ENCODE measurements at regions of chr1 and their contacts with region 1.

Region 1: GRCh38 chr1:210311726-210312493 is 16.8 kb upstream of the HHAT start:
- DNase-seq: peak in 3 of 5 donors; percentile 43 to 52 (median 43)
- ATAC-seq: peak; percentile 55 to 83 (median 64)
- H3K4me3 ChIP-seq: peak overlapping the region in 10 of 12 donors; percentile 27 to 55 (median 42)
- H3K27ac ChIP-seq: peak overlapping the region; percentile 9 to 94 (median 70)
- H3K4me1 ChIP-seq: peaks cover 0 to 23% (median 6%) of the 10 kb centered on the region in 12 donors
- H3K27me3 ChIP-seq: peaks cover 0 to 3% (median 0%) of the 10 kb centered on the region in 9 donors
- CTCF ChIP-seq: no peak
- POLR2A ChIP-seq: no peak

Region 2: DNA sequence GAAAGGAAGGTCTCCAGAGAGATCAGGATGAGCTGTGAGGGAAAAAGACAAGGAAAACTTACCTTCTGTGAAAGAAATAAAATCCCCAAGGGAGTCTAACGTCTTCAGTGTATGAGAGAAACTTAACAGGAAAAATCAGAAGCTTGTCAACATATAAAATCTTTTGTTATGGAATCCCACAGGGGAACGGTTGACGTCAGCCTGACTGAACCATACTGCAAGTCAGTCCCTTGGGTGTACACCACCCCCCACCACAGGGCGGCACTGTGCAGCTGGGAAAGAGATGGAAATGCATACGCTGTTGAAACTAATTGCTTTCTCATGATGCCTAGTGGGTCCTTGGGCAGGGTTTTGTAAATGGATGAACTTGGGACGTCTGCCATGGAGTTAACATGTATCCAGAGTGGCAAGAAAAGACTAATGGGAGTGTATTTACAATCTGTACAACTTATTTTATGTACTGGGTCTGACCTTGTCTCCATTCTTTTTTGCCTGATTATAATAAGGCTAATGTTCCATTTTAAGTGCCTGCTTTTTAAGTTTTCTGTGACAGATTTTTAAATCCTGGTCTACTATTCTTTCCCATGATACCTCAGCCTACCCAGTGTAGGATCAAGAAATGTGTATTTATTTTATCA is 461.4 kb before region 1 on chr1:
- intact Hi-C with region 1: loop called in 3 of 10 experiments (anchors 10 kb)
- DNase-seq: peak in 4 of 5 donors; percentile 28 to 54 (median 45)
- ATAC-seq: peak in 2 of 4 donors; percentile 42 to 57
- H3K4me3 ChIP-seq: no peak overlapping the region
- H3K27ac ChIP-seq: no peak overlapping the region
- H3K4me1 ChIP-seq: peaks cover 0 to 7% (median 0%) of the 10 kb centered on the region in 12 donors
- H3K27me3 ChIP-seq: no peaks in the 10 kb centered on the region
- CTCF ChIP-seq: peak; percentile 17 to 53 (median 31)
- POLR2A ChIP-seq: no peak

Region 3: DNA sequence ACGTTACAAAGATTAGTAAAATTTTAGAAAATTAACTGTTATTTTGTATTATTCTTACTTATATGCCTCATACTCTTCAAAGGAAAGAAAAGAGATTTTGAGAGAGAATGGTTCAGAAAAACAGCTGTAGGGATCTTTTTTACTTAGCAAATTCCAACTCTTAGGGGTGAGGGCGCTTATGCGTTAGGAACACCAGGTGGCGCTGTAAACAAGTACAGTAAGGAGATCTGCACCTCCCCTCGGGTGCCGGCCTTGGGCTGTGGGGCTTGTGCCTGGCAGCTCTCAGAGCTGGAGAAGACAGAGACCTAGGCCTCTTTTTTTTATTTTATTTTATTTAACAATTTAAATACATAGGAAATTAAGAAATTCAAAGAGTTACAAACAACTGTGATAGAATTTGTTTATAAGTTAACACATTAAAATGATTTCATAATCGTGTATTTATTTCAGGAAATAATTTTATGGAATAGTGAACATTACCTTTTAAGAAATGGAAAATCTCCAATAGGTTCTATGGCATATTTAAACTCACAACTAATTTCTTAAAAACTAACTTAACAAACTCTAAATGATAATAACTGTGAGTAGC is 451.5 kb before region 1 on chr1:
- intact Hi-C with region 1: loop called in 7 of 10 experiments (anchors 2 to 10 kb)
- DNase-seq: peak; percentile 56 to 82 (median 73)
- ATAC-seq: peak; percentile 47 to 84 (median 76)
- H3K4me3 ChIP-seq: no peak overlapping the region
- H3K27ac ChIP-seq: no peak overlapping the region
- H3K4me1 ChIP-seq: no peaks in the 10 kb centered on the region
- H3K27me3 ChIP-seq: peaks cover 0 to 38% (median 10%) of the 10 kb centered on the region in 9 donors
- CTCF ChIP-seq: peak; percentile 79 to 93 (median 88)
- POLR2A ChIP-seq: no peak

Region 4: GRCh38 chr1:210143465-210144062 is 168.3 kb before region 1 on chr1:
- intact Hi-C with region 1: loop called (anchors 1 to 2 kb)
- DNase-seq: peak; percentile 47 to 78 (median 61)
- ATAC-seq: peak in 1 of 4 donors; percentile 51
- H3K4me3 ChIP-seq: no peak overlapping the region
- H3K27ac ChIP-seq: no peak overlapping the region
- H3K4me1 ChIP-seq: no peaks in the 10 kb centered on the region
- H3K27me3 ChIP-seq: peaks cover 0 to 7% (median 0%) of the 10 kb centered on the region in 9 donors
- CTCF ChIP-seq: peak; percentile 55 to 80 (median 68)
- POLR2A ChIP-seq: no peak

Region 5: DNA sequence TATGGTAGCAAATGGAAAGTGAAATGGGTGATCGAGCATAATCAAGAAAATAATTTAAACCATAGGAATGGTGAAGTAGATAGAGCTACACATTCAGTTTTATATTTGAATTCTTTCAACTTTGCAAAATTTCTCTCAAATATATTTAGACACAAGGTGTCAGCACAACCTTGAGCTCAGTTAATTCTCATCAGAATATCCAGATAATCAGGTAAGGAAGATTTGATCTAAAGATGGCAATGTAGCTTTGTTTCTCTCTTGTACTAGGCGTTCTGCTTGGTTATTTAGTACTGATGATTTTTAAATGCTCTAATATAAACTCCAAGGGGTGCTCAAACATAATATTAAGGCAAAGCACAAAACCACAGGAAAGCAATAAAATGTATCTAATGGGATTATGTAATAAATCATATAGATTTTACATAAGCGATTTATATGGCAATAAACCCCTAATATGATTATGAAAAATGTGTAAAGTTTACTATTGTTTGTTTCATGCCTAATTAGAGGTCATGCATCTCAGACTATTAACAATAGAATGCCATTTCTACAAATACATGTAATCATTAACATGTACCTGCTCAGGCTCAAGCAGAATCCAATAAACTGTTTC is 111.7 kb before region 1 on chr1:
- intact Hi-C with region 1: loop called in 3 of 10 experiments (anchors 2 to 5 kb)
- DNase-seq: no peak
- ATAC-seq: no peak
- H3K4me3 ChIP-seq: no peak overlapping the region
- H3K27ac ChIP-seq: no peak overlapping the region
- H3K4me1 ChIP-seq: no peaks in the 10 kb centered on the region
- H3K27me3 ChIP-seq: peaks cover 0 to 4% (median 0%) of the 10 kb centered on the region in 9 donors
- CTCF ChIP-seq: peak in 8 of 12 donors; percentile 5 to 46 (median 24)
- POLR2A ChIP-seq: no peak

Region 6: DNA sequence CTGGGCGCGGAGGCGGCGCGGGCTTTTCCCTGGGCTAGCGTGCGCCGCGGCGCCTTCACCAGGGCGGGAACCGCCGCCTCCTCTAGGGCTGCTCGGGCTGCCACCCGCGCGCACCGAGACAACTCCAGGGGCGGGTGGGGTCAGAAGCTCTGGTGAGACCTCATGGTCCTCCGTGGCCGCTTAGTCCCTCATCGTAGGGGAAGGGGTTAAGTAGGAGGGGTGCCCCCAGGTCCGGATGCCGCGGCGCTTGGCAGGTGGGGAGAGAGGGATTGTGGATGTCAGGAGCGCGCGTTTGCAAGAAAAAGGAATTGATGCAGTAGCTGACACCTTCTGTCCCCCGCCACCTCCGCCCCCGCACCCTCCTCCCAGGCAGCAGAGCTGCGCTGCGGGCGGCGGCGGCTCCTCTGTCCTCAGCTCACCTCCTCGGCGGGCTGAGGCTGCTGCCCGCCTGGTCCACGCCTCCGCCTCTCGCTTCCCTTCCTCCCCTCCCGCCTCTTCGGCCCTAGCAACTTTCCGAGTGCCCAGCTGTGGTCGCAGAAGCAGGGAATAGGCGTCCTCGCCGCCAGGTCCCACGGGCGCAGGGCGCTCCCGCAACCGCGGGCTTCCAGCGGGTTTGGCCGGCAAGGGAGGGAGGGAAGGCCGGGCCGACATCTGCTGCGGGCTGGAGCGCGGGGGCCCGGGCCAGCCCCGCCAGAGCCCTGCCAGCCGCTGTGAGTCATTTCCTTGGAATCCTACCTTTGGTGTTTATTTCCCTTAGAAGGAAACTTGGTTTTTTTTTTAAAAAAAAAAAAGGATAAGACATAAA is 78.5 kb before region 1 on chr1:
- intact Hi-C with region 1: loop called in 3 of 10 experiments (anchors 5 to 10 kb)
- DNase-seq: peak; percentile 42 to 73 (median 45)
- ATAC-seq: peak in 3 of 4 donors; percentile 29 to 41 (median 33)
- H3K4me3 ChIP-seq: peak overlapping the region; percentile 57 to 84 (median 66)
- H3K27ac ChIP-seq: peak overlapping the region; percentile 50 to 96 (median 84)
- H3K4me1 ChIP-seq: peaks cover 0 to 50% (median 19%) of the 10 kb centered on the region in 12 donors
- H3K27me3 ChIP-seq: peaks cover 0 to 48% (median 0%) of the 10 kb centered on the region in 9 donors
- CTCF ChIP-seq: no peak
- POLR2A ChIP-seq: no peak

Region 7: GRCh38 chr1:210328746-210329503 is 17.0 kb after region 1 on chr1 and contains the start of gene HHAT:
- intact Hi-C with region 1: loop called in 1 of 10 experiments (anchors 2 kb)
- DNase-seq: peak; percentile 84 to 93 (median 92)
- ATAC-seq: peak; percentile 77 to 95 (median 94)
- H3K4me3 ChIP-seq: peak within 1 kb of the TSS; percentile 63 to 89 (median 76)
- H3K27ac ChIP-seq: peak within 1 kb of the TSS; percentile 87 to 99 (median 97)
- H3K4me1 ChIP-seq: peaks cover 0 to 29% (median 15%) of the 10 kb centered on the region in 12 donors
- H3K27me3 ChIP-seq: no peaks in the 10 kb centered on the region
- CTCF ChIP-seq: peak in 4 of 12 donors; percentile 18 to 50 (median 31)
- POLR2A ChIP-seq: peak in 1 of 2 donors; percentile 50
- total RNA-seq, gene HHAT: 1.1 to 4.7 (median 2.9) TPM